Endothelial cell of umbilical vein (primary cell): ENCODE measurements at regions of chr15 and their contacts with region 1.

Region 1: GRCh38 chr15:55917881-55918296 is 75.5 kb downstream of the NEDD4 start:
- DNase-seq: peak; percentile 92
- H3K4me3 ChIP-seq: no peak overlapping the region
- H3K27ac ChIP-seq: no peak overlapping the region
- H3K4me1 ChIP-seq: peaks cover 15% of the 10 kb centered on the region
- H3K27me3 ChIP-seq: no peaks in the 10 kb centered on the region
- CTCF ChIP-seq: peak; percentile 39 to 53
- POLR2A ChIP-seq: no peak

Region 2: DNA sequence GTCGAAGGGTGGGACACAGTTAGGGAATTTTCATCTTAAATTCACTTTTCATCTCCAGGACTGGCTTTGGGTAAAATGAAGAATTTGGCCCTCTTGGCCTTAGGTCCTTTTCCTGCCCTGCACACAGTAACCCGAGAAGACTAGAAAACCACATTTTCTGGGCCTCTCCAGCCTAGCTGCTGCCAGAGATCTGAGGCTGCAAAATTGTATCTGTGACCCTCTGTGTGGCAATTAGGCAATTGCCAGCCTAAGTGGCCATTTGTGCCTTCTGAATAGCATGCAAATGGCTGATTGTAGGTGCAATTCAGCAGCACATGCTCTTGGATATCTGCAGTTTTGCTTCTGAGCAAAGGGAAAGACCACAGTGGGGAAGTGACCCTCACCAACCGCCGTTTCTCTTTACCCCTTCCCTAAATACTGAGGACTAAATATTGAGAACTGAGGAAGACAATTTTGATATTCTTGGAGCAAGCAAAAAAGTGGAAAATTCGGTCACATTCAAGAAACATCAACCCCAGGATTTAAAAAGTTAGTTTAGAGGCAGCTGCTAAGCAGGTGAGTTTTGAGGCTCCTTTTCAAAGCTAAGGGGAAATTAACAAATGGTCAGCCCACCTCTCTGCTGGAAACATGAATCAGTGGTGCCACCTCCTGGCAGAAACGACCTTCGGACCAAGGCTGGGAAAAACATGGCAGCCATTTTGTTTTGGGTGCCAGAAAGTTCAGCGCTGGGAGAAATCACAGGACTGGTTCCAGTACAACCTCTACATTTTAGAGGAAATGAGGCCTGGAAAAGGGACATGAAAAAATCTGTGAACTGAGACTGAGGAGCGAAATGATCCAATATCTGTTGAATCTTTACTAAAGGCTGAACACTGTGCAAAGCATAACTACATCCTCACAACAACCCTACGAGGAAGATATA is 118.3 kb before region 1 on chr15:
- CTCF ChIA-PET with region 1: interaction called, 11 read pairs
- POLR2A ChIA-PET with region 1: no interaction called
- dilution Hi-C with region 1: no loop called
- intact Hi-C with region 1: loop called (anchors 5 kb)
- DNase-seq: peak; percentile 69
- H3K4me3 ChIP-seq: no peak overlapping the region
- H3K27ac ChIP-seq: no peak overlapping the region
- H3K4me1 ChIP-seq: no peaks in the 10 kb centered on the region
- H3K27me3 ChIP-seq: peaks cover 5 to 7% of the 10 kb centered on the region in 2 experiments
- CTCF ChIP-seq: peak; percentile 72
- POLR2A ChIP-seq: no peak

Region 3: DNA sequence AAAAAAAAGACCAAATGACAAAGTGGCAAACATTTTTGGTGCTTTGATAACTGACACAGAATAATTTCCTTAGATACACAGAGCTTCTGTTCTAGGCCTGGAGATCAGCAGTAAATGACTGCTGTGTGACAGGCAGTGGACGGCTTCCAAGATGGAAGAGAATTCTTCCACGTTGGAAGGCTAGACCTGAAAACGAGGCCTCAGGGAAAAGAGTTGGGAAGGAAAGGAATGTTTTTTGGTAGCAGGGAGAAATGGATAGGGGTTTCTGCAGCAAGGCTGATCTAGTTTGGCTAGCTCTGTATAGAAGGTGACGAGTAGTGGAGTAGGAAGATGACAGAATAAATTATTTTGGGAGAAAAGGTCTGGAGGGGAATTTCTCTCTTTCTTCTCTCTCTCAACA is 52.3 kb before region 1 on chr15:
- CTCF ChIA-PET with region 1: interaction called, 12 read pairs
- POLR2A ChIA-PET with region 1: no interaction called
- dilution Hi-C with region 1: no loop called
- intact Hi-C with region 1: no loop called
- DNase-seq: no peak
- H3K4me3 ChIP-seq: no peak overlapping the region
- H3K27ac ChIP-seq: no peak overlapping the region
- H3K4me1 ChIP-seq: peaks cover 5% of the 10 kb centered on the region
- H3K27me3 ChIP-seq: no peaks in the 10 kb centered on the region
- CTCF ChIP-seq: no peak
- POLR2A ChIP-seq: no peak

Region 4: DNA sequence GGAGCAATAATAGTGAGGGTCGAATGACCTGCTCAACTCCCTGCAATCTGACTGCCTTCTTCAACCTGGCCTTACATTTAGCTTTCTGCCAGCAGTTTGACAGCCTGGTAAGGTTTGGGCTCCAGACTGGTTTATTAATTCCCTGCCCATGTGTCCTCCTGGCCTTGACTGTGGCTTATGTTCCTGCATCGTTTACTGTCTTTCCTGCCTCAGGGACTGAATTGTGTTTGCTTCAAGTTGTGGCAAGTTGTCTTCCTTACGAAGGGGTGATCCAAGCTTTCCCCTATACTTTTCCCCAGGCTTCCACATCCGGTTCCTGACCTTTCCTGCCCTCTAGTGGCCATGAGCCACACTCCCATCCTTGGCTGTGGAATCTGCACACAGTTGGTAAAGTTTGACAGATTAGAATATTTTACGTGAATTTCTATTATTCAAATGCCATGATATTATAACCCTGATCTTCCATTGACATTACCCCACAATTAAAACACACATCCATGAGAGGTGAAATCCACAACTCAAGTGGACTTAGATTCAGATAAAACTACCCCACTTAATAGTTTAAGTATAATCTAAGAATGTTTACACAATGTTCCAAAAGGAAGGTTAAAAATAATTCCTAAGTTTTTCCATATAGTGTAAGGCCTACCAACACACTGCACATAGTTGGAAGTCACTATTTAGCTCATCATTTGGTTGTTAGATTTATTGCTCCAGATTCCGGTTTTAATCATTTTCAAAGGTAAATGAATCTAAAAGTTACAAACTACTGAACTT is 20.1 kb before region 1 on chr15:
- CTCF ChIA-PET with region 1: interaction called, 109 read pairs
- POLR2A ChIA-PET with region 1: interaction called, 3 read pairs
- dilution Hi-C with region 1: no loop called
- intact Hi-C with region 1: no loop called
- DNase-seq: peak; percentile 67
- H3K4me3 ChIP-seq: peak overlapping the region in 1 of 3 experiments; percentile 23
- H3K27ac ChIP-seq: peak overlapping the region; percentile 96
- H3K4me1 ChIP-seq: peaks cover 38% of the 10 kb centered on the region
- H3K27me3 ChIP-seq: no peaks in the 10 kb centered on the region
- CTCF ChIP-seq: peak; percentile 67 to 76
- POLR2A ChIP-seq: no peak

Region 5: DNA sequence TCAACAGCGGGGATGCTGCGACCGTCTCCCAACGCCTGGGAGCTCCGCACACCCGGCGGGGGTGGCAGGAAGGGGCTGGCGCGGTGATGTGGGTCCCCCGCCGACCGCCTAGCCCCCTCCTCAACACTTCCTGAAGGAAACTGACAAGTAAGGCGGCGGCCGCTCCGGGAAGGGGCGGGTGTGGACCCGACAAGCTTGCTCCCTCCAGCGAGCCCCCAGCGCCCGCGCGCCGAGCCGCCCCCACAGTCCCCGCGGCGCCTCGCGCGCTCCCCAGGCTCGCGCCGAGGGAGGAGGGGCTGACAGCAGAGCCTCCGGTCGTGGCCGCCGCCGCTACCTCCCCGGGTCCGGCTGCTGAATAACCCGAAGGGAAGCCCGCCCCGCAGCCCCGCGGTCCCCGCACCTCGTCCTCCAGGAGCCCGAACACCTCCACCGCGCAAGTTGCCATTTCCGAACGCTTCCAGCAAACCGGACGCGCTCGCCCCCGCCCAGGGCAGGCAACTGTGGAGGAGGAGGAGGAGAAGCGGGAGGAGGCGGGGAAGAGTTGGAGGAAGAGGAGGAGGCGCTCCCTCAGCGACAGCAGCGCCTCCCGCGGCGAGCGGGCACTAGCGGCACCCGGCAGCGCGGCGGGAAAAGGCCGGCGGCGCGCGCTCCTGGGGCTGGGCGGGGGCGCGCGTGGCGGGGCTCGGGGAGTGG is 75.4 kb after region 1 on chr15 and contains the start of gene NEDD4:
- CTCF ChIA-PET with region 1: interaction called, 37 read pairs
- POLR2A ChIA-PET with region 1: interaction called, 7 read pairs
- dilution Hi-C with region 1: no loop called
- intact Hi-C with region 1: loop called (anchors 5 kb)
- DNase-seq: peak; percentile 92
- H3K4me3 ChIP-seq: peak within 1 kb of the TSS; percentile 79 to 97 (median 93)
- H3K27ac ChIP-seq: peak within 1 kb of the TSS; percentile 68
- H3K4me1 ChIP-seq: peaks cover 20% of the 10 kb centered on the region
- H3K27me3 ChIP-seq: no peaks in the 10 kb centered on the region
- CTCF ChIP-seq: peak; percentile 35 to 76
- POLR2A ChIP-seq: peak; percentile 75
- total RNA-seq, gene NEDD4: 34.2 and 39.0 TPM in 2 replicates